CD4-positive, alpha-beta memory T cell (primary cell): ENCODE measurements at regions of chr1 and their contacts with region 1.

Region 1: DNA sequence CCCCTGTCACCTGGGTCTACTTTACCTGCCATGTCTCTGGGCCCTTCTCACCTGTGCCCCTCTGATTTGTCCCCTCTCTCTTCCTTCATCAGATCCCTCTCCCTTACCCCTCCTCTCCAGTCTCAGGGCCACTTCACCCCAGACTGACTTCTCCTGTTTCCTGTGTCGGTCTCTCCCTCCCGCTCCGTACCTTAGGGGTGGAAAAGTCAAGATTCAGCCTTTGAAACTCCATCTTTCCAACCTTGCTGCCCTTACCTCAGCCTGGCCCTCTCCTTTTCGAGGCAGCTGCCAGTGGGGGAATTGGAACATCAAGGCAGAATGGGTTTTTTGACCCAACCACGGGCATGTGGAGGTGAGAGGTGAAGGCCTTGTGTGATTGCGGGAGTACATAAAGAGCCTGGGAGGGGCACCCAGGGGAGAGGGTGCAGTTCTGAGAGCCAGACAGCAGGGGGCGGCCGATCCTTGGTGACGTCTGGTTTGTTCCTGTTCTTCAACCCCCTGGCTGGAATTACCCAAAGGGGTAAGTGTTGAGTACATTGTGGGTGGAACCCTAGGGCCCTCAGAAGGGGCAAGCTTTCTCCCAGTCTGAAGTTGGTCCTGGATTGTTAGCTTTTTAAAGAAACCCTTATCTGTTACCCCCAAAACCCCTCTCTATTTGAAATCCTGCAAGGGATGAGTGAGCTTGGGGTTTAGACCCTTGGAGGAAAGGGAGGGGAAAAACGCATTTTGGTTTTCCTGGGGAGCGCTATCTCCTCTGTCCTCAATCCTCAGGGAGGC is 12.3 kb upstream of the DMBX1 start:
- DNase-seq: peak; percentile 64 to 73 (median 67)
- H3K4me3 ChIP-seq: no peak overlapping the region
- H3K4me3 Mint-ChIP-seq: no peak overlapping the region
- H3K27ac ChIP-seq: no peak overlapping the region
- H3K27ac Mint-ChIP-seq: no peak overlapping the region
- H3K4me1 ChIP-seq: no peaks in the 10 kb centered on the region
- H3K4me1 Mint-ChIP-seq: peaks cover 0 to 5% (median 0%) of the 10 kb centered on the region in 4 donors
- H3K27me3 ChIP-seq: no peaks in the 10 kb centered on the region
- H3K27me3 Mint-ChIP-seq: peaks cover 6 to 33% of the 10 kb centered on the region in 2 donors

Region 2: DNA sequence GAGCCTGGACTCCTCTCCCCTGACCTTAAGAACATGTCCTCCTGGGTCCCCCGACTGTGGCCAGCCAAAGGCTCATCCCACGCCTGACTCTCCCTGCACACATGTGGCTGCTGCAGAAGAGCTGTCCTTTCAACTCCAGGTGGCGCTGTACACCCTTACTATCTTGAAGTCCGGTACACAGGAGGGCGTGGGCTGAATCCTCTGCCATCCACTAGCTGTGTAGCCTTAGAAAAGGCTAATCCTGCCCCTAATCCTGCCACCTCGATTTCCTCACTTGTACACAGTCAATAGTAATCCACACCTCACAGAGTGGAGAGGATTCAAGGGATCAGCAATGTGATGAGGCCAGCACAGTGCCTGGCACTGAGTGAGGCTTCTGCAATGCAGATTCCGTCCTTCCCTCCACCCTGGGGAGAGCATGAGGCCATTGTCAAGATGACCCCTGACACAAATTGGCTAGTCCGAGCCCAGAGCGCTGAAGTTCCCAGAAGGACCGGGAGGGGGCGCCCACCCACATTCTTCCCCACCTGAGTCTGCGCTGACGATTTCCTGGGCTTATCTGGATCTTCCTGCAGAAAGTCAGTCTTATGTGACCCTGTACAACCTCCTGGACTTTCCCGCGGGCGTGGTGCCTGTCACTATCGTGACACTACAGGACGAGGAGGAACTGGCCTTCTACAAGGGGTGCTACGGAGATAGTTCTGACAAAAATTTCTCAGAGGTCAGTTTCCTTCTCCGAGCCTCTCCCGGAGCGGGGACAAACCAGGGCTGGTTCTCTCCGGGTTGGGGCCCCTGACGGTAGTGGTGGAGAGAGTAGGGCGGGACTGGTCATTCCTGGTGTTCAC is 34.8 kb before region 1 on chr1:
- CTCF ChIA-PET with region 1: interaction called, 6 read pairs
- POLR2A ChIA-PET with region 1: no interaction called
- intact Hi-C with region 1: loop called (anchors 1 kb)
- DNase-seq: peak; percentile 57 to 64 (median 59)
- H3K4me3 ChIP-seq: peak overlapping the region; percentile 63 to 66
- H3K4me3 Mint-ChIP-seq: peak overlapping the region; percentile 85 to 92 (median 88)
- H3K27ac ChIP-seq: no peak overlapping the region
- H3K27ac Mint-ChIP-seq: peak overlapping the region in 6 of 7 donors; percentile 46 to 85 (median 70)
- H3K4me1 ChIP-seq: peaks cover 15% of the 10 kb centered on the region
- H3K4me1 Mint-ChIP-seq: peaks cover 14 to 32% (median 17%) of the 10 kb centered on the region in 4 donors
- H3K27me3 ChIP-seq: peaks cover under 1% of the 10 kb centered on the region
- H3K27me3 Mint-ChIP-seq: peaks cover 14 to 15% of the 10 kb centered on the region in 2 donors

Region 3: GRCh38 chr1:47593013-47593568 is 1115.8 kb after region 1 on chr1:
- CTCF ChIA-PET with region 1: no interaction called
- POLR2A ChIA-PET with region 1: no interaction called
- intact Hi-C with region 1: no loop called
- DNase-seq: no peak
- H3K4me3 ChIP-seq: no peak overlapping the region
- H3K4me3 Mint-ChIP-seq: no peak overlapping the region
- H3K27ac ChIP-seq: no peak overlapping the region
- H3K27ac Mint-ChIP-seq: no peak overlapping the region
- H3K4me1 ChIP-seq: no peaks in the 10 kb centered on the region
- H3K4me1 Mint-ChIP-seq: peaks cover 0 to 2% (median under 1%) of the 10 kb centered on the region in 4 donors
- H3K27me3 ChIP-seq: peaks cover 6% of the 10 kb centered on the region
- H3K27me3 Mint-ChIP-seq: peaks cover 18 to 26% of the 10 kb centered on the region in 2 donors